ENCODE measurements at regions of chr17 and their contacts with region 1.

Region 1: DNA sequence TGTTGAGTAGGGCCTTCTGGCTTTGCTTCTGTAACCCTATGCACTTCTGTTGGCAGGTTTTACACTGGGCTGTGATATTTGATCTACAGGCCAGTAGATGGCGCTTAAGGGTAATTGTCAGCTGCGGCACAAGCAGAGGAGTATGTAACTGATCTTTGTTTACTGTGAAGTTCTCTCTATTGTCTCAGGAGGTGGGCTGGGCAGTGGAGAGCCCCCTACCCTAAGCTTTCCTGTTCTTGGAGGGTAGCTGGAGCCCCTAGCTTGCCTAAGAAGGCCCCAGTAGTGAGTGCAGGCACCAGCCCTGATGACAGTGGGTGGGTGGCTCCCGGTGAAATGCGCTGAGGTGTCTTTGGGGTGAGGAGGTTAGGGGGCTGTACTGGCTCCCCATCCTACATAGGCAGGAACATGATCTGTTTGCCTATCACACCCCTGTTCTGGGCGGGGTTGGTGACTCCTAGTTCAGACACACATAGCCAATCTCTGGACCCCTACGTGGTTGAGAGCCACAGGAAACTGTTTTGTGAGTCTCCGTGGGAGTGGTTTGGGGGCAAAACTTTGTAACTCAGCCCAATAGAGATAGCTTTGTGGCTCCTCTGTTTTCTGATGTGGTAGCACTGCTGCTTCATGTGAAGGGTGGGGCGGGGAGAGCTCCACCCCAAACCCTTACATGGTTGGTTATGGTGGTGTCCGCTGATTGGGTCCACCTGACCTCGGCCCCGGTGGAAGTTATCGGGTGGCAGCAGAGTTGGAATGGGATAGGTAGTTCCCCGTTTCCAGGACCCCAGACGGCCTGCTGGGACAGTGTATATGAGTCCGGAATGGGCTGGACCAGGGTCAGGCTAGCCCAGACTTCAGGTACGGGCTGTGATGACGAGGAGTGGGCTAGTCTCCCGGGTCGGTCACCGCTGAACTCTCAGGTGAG is 60.4 kb downstream of the SLFN11 start:
- DNase-seq: peak; percentile 36 to 45
- ATAC-seq: peak; percentile 87

Region 2: DNA sequence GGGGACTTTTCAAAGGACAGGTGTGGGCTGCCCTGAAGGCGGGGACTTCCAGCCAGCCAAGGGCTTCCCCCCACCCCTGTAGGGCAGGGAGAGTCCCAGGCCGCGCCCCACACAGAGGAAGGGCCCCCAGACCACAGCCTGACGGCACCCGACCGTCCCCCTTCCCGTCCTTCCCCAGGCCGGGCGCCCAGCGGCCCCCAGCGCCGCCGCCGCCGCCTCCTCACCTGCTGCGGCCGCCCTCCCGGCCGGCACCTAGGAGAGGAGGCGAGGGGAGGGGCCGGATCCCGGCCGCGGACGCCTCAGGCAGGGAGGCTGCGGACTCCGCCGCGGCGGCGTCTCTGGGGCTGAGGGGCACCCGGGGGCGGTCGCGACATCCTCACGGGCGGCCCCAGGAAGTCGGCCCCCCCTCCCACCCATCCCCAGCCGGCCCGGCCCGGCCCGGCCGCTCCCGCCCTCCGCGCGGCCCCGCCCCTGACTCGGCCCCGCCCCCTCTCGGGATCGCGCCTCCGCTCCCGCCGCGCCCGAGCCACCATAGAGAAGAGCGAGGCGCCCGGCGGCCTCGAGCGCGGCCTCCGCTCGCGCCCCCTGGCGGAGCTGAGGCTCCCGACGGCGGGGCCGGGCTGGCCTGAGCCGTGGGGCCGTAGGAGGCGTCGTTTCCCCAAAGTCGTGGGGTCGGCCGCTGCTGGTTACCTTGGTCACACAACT is 224.0 kb before region 1 on chr17:
- intact Hi-C with region 1: no loop called
- DNase-seq: peak; percentile 80 to 91
- ATAC-seq: peak; percentile 76

Region 3: DNA sequence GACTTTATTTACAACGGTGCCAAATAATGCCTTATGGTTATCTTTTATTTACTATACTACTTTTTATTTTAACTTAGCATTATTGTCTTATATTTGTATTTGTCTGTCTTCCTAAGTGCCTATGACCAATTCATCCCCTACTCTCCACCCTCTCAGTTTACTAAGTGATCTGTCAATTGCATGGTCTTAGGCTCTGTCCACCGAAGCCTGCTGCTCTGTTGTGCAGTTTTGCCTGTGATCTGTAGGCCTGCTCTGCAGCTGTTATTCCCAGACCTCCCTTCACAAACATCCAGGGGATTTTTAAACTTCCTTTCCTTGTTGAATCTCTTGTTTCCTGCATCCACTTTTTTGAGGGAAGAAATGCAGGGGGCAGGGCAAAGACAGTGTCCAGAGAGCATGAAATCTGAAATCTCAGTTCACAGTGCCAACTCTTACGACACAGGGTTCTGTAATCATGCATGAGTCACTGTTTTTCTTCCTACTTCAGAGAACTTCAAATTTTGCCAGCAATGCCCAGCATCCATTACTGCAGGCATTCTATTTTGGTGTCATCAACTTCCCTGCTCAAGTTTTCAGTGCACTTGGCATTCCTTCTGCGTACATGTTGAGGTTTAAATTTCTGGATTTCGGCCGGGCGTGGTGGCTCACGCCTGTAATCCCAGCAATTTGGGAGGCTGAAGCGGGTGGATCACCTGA is 58.8 kb before region 1 on chr17:
- intact Hi-C with region 1: no loop called
- DNase-seq: peak; percentile 13 to 60
- ATAC-seq: peak; percentile 56

Region 4: DNA sequence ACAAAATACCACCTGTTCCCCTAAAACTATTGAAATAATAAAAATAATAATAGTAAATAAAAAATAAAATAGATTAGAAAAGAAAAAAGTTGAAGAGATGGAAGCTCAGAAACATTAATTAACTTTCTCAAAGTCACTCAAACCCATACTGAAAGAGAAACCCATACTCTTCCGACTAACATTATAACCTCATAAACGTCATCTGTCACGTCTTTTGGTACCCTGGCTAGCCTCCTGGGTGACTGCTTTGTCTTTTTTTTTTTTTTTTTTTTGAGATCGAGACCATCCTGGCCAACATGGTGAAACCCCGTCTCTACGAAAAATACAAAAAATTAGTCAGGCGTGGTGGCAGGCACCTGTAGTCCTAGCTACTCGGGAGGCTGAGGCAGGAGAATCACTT is 216.8 kb after region 1 on chr17:
- intact Hi-C with region 1: loop called in 1 of 2 experiments (anchors 5 kb)
- DNase-seq: no peak
- ATAC-seq: no peak

Region 5: DNA sequence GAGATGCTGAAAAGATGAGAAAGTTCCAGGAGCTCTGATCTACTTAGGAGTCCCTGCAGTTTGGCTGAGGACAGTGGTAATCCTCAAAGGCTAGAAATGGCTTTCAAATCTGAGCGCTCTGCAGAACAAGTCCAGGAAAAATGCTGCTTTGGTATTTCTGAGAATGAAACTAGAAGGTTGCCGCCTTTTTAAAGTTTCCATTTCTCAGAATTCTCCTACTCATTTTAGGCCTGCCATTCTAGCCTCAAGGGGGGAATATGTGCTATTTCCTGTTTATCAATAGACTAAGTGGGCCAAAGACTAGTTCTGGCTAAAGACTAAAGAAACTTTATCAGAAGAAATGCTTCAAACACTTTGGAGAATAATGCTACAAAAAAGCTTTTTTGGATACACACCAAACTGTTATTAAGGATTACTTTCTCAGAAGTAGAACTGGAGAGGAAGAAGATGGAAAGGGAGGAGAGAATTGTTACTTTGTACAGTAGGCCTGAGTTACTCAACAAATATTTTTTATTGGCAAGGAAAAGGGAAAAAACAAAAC is 224.6 kb after region 1 on chr17 and contains the start of gene SLFN12L:
- intact Hi-C with region 1: loop called (anchors 2 to 5 kb)
- DNase-seq: no peak
- ATAC-seq: no peak
- total RNA-seq, gene SLFN12L: 1.3 to 2.0 TPM

Region 6: DNA sequence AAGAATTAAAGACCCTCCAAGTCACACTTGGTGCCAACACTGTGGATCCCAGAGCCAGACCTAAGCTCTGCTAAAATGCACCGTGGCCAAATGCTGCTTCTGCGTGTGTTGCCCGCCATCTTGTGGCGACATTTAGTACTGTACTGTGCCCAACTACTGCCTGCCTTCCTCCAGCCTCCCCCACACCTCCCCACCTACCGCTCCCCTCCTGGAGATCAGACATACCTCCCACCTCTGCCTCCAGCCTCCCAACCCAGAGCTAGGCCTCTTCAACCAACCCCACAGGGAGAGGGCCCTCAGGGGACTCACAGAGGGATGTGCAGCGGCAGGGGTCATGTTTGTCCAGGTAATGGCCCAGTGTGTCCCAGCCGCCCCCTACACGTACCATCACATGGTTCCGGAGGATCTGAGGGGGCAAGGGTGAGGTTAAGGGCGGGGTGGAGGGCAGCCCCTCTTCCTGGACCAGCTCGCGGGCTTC is 434.5 kb after region 1 on chr17:
- intact Hi-C with region 1: loop called in 1 of 2 experiments (anchors 10 kb)
- DNase-seq: peak; percentile 58 to 84
- ATAC-seq: peak; percentile 84